ENCODE measurements at regions of chr19 and their contacts with region 1.

Region 1: GRCh38 chr19:42693764-42694350 is 46.4 kb downstream of the PSG3 start:
- DNase-seq: peak; percentile 49
- ATAC-seq: peak; percentile 91
- H3K4me3 ChIP-seq: no peak overlapping the region
- H3K27ac ChIP-seq: no peak overlapping the region
- H3K4me1 ChIP-seq: no peaks in the 10 kb centered on the region
- H3K27me3 ChIP-seq: no peaks in the 10 kb centered on the region
- CTCF ChIP-seq: peak; percentile 66
- EP300 ChIP-seq: no peak
- POLR2A ChIP-seq: no peak
- RAD21 ChIP-seq: no peak

Region 2: DNA sequence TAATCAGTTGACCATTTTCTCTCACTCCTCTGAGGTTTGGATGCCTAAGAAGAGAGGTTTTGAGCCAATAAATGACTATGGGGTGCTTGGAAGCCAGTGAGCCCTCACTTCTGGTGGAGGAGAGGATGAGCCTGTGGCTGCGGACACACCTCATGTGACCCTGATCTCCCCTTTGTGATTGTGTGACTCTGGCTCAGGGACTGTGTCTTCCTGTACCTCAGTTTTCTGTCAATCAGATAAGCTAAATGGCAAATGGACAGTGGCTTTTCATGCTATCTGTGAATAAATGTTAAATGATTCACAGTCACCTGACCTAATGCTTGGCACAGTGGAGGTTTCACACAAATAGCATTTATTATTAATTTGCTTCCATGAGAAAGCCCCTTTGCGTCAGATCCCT is 68.9 kb after region 1 on chr19:
- CTCF ChIA-PET with region 1: no interaction called
- POLR2A ChIA-PET with region 1: no interaction called
- in situ Hi-C with region 1: no loop called
- intact Hi-C with region 1: loop called (anchors 10 kb)
- DNase-seq: no peak
- ATAC-seq: no peak
- H3K4me3 ChIP-seq: no peak overlapping the region
- H3K27ac ChIP-seq: no peak overlapping the region
- H3K4me1 ChIP-seq: no peaks in the 10 kb centered on the region
- H3K27me3 ChIP-seq: no peaks in the 10 kb centered on the region; a peak in 1 of 5 replicates
- CTCF ChIP-seq: no peak
- EP300 ChIP-seq: no peak
- POLR2A ChIP-seq: no peak
- RAD21 ChIP-seq: no peak

Measured in HepG2 (cell line).